ENCODE measurements at regions of chr1 and their contacts with region 1.

Region 1: DNA sequence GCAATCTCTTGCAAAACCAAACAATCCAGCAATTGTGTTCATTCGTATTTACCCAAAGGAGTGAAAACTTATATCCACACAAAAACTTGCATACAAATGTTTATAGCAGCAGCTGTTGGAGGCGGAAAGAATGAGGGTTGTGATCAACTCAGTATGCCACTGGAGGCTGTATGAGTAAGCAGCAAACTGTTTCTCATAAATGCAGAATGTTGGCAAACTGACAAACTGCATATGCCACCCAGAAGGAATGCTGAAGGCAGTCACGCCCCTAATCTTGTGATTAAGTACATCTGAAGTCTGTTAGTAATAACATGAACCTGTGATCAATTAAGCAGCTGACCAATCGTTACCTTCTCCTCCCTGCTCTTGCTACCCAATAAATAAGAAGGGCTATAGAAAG is 60.5 kb upstream of the CR2 start:
- DNase-seq: no peak
- H3K4me3 Mint-ChIP-seq: no peak overlapping the region
- H3K27ac Mint-ChIP-seq: no peak overlapping the region
- H3K4me1 Mint-ChIP-seq: peaks cover 20% of the 10 kb centered on the region
- H3K27me3 Mint-ChIP-seq: peaks cover 2% of the 10 kb centered on the region

Region 2: DNA sequence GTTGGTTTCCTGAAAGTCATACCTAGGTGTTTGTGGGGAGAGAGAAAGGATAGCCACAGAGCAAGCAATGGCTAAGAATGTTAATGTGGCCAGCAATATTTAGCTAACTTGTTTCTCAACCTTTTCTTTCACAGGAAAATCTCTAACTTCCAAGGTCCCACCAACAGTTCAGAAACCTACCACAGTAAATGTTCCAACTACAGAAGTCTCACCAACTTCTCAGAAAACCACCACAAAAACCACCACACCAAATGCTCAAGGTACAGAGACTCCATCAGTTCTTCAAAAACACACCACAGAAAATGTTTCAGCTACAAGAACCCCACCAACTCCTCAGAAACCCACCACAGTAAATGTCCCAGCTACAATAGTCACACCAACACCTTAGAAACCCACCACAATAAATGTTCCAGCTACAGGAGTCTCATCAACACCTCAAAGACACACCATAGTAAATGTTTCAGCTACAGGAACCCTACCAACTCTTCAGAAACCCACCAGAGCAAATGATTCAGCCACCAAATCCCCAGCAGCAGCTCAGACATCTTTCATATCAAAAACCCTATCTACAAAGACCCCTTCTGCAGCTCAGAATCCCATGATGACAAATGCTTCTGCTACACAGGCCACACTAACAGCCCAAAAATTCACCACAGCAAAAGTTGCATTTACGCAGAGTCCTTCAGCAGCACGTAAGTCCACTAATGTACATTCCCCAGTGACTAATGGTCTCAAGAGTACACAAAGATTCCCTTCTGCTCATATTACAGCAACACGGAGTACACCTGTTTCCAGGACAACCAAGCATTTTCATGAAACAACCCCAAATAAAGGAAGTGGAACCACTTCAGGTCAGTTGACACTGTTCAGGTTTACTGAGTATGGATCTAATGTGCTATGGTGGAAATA is 56.8 kb before region 1 on chr1:
- CTCF ChIA-PET with region 1: interaction called, 3 read pairs
- intact Hi-C with region 1: loop called (anchors 1 kb)
- DNase-seq: peak; percentile 43
- H3K4me3 Mint-ChIP-seq: no peak overlapping the region
- H3K27ac Mint-ChIP-seq: peak overlapping the region; percentile 82
- H3K4me1 Mint-ChIP-seq: peaks cover 68% of the 10 kb centered on the region
- H3K27me3 Mint-ChIP-seq: no peaks in the 10 kb centered on the region

Region 3: GRCh38 chr1:207355060-207355459 is 38.5 kb before region 1 on chr1:
- CTCF ChIA-PET with region 1: interaction called, 3 read pairs
- intact Hi-C with region 1: loop called (anchors 5 kb)
- DNase-seq: no peak
- H3K4me3 Mint-ChIP-seq: no peak overlapping the region
- H3K27ac Mint-ChIP-seq: no peak overlapping the region
- H3K4me1 Mint-ChIP-seq: peaks cover 55% of the 10 kb centered on the region
- H3K27me3 Mint-ChIP-seq: no peaks in the 10 kb centered on the region

Region 4: DNA sequence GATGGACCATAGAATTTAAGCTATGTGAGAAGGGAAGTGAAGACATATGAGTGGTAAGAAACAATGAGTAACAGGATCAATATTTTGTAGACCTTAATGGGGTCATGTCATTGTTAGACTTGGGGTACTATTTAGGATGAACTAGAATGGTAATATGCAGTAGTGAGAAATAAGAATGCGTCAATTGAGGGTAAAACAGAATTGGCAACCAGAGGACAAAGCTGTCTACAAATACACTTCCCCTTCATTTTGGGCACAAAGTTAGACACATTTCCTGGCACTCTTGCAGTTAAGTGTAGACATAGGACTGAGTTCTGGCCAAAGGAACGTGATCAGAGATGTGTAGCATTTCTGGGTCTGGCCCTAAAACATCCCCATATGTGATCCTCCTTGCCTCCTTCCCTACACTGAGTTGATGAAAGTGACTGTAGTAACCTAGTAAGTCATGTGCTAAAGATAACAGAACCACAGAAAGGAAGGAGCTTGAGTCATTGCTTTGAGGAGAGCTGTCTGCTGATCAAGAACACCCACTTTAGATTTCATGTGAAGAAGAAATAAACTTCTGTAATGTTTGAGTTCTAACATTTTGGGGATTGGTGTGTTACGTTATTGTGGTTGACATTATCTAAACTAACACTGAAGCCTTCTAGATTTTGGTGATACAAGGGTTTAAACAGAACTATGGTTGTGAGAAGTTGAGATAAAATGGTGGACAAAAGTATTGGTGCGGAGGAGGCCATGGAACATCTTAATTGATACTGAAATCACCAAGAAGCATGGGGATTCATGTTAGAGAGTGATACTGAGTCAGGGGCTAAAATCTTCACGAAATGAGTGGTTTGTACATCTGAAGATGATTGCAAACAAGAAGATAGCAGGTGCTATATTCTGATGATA is 30.4 kb before region 1 on chr1:
- CTCF ChIA-PET with region 1: interaction called, 3 read pairs
- intact Hi-C with region 1: loop called (anchors 1 kb)
- DNase-seq: peak; percentile 39
- H3K4me3 Mint-ChIP-seq: no peak overlapping the region
- H3K27ac Mint-ChIP-seq: no peak overlapping the region
- H3K4me1 Mint-ChIP-seq: peaks cover 5% of the 10 kb centered on the region
- H3K27me3 Mint-ChIP-seq: no peaks in the 10 kb centered on the region

Region 5: DNA sequence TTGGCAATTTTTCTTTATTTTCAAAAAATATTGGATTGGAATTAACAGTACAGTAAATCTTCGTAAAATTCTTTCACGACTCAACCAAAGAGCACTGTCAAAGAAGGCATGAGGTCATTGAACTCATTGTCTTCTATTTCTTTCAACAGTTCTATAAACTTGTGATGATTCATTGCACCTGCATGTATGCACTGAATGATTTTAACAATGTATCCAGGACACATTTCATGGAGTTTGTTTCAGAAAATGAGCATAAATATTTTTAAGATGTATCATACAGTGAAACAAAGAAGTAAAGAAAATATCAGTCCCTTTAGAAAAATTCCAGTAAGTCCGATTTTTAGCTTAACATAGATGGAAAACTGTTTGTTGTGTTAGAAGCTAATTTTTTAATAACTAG is 551.0 kb after region 1 on chr1:
- CTCF ChIA-PET with region 1: no interaction called
- intact Hi-C with region 1: no loop called
- DNase-seq: no peak
- H3K4me3 Mint-ChIP-seq: no peak overlapping the region
- H3K27ac Mint-ChIP-seq: no peak overlapping the region
- H3K4me1 Mint-ChIP-seq: no peaks in the 10 kb centered on the region
- H3K27me3 Mint-ChIP-seq: peaks cover 10% of the 10 kb centered on the region

Measured in activated naive CD4-positive, alpha-beta T cell treated with anti-CD3 and anti-CD28 coated beads for 36 hours (primary cell).